ENCODE measurements at regions of chr9 and their contacts with region 1.

Region 1: GRCh38 chr9:74777136-74777879 is 110.4 kb downstream of the TRPM6 start:
- DNase-seq: peak in 1 of 2 donors; percentile 54
- H3K4me3 ChIP-seq: no peak overlapping the region
- CTCF ChIP-seq: peak in 1 of 3 donors; percentile 22
- POLR2A ChIP-seq: no peak

Region 2: DNA sequence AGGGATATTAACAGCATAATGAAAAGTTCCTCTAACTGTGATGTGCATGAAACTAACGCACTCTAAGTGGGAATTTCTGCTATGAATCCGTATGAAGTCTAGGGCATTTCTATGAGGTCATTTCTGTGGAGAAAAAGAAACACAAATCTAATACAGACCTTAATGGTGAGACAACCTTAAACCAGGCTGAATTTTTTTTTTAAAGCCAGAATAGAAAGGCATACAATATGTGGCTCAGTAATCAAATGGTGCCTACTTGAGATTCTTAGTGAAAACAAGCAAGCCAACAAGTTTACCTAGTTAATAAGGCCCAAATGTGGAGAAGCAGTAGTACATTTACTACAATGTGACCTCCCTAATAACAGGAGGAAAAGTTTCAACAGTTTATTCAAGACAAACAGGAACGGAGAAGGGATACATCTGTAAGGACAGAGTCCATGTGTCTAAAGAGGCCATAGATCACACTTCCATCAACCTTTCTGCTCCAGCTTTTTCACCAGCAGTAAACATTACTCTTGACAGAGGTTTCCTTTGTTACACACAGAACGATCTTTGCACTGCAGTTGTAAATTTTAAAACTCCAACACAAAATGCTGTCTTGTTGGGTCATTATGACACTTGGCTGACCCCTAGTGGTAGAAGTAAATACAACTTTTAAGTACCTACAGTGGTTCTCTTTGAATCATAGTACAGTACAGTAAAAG is 224.6 kb after region 1 on chr9:
- intact Hi-C with region 1: loop called (anchors 1 kb)
- DNase-seq: no peak
- H3K4me3 ChIP-seq: no peak overlapping the region
- CTCF ChIP-seq: peak in 1 of 3 donors; percentile 37
- POLR2A ChIP-seq: no peak

Region 3: DNA sequence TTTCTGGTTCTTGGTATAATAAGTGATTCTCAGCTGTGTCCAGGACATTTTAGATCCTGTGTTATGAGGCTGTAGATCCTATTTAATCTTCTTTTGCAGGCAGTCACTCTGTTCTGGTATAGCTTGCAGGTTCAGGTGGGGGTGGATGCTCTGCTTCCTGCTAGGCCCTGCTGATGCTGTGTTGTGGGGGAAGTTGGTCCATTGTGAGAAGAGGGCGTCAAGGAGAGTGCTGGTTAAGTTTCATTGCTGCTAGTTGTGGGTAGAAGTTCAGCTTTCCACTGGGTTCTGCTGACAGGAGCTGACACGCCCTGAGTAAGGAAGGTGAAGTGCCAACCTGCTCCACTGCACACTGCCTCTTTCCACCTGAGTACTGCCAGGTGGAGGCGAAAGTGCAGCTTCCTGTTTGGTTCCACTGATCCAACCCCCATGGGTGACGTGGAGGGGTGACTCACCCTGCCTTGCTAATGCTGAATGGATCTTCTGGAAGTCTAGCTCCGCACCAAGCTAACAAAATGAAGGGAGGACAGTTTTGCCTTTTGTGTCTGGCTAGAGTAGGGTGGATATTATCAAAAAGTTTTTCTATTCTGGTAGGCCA is 294.3 kb after region 1 on chr9:
- intact Hi-C with region 1: loop called (anchors 5 kb)
- DNase-seq: peak in 1 of 2 donors; percentile 71
- H3K4me3 ChIP-seq: no peak overlapping the region
- CTCF ChIP-seq: no peak
- POLR2A ChIP-seq: no peak

Measured in lower leg skin (tissue), 4 donors.